ENCODE measurements at regions of chr12 and their contacts with region 1.

Region 1: DNA sequence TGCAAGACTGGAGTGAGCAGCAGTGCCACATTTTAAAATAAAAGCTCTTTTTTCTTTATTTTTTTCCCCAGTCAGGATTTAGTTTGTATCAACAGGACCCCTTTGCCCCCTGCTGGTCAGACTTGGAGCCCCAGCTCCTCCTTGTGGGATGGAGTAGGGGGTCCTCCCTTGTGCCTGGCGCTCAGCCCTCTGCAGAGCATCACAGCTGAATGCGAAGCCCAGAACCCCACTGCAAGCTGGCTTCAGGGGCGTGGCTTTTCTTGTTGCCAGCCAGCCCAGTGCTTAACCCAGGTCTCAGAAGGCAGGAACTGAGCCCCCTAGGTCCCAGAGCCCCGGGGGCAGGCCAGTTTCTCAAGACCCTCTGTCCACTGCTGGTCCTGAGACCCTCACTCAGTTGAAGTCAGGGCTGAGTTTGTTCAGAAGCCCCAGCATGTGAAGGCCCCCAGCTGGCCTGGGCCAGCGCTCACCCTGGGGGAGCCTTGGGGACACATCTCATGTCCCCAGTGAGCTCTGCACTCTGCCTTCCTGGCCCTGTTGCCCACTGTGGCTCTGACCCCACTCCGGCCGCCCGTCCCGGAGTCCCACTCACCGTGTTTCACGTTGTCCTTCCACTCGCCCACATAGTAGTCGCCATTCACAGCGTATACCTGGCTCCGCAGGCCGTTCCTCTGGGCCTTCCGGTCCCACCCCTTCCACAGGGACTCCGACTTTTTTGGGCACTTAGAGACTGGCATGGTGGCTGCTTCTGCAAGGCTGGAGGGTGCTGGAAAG is 519 bp downstream of the MORN3 start:
- DNase-seq: peak; percentile 46 to 85 (median 60)
- ATAC-seq: no peak
- H3K4me3 Mint-ChIP-seq: peak overlapping the region in 7 of 10 donors; percentile 18 to 68 (median 45)
- H3K27ac Mint-ChIP-seq: peak overlapping the region in 9 of 10 donors; percentile 48 to 94 (median 85)
- H3K4me1 Mint-ChIP-seq: peaks cover 24 to 64% (median 62%) of the 10 kb centered on the region in 4 donors
- H3K27me3 Mint-ChIP-seq: no peaks in the 10 kb centered on the region

Region 2: DNA sequence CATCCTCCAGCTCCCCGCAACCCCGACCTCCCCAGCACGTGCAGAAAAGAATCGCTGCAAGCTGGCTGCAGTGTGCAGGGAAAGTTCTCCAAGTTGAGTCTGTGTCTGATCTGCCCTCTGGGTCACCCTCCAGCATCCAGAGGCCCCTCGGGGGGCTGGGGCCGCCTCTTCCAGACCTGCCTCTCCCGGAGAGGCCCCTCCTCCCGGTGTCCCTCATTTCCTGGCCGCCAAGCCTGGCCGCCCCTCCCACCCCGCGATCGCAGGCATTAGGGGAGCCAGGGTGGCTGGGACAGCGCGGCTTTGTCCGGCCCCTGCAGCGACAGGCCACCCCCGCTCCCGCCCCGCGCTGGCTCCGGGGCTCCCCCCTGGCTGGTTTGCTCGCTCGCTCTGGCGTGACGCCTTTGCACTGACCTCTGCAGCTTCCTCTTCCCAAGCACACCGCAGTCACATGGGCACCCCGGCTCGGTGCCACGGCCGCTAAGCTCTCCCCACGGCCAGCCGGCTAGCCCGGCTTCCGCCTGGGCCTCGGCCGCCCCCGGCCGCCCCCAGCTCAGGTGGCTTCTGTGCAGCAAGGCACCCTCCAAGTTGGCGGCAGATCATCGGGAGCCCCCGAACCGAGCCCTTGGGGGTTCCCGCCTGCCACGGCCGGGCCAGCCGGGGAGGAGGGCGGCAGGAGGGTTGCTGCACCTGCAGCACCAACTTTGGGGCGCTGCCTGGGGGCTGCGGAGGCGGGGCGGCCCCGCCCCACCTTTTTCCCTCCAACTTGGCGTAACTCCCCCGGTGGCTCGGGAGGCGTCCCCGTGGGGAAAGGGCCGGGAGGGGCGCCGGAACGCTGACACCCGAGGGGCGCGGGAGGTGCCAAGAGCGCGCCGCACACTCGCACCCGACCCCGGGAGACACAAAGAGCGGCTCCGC is 131.8 kb before region 1 on chr12:
- POLR2A ChIA-PET with region 1: interaction called, 11 read pairs
- DNase-seq: peak; percentile 31 to 74 (median 51)
- ATAC-seq: peak in 1 of 2 donors; percentile 5
- H3K4me3 Mint-ChIP-seq: peak overlapping the region; percentile 72 to 92 (median 78)
- H3K27ac Mint-ChIP-seq: peak overlapping the region; percentile 85 to 99 (median 95)
- H3K4me1 Mint-ChIP-seq: peaks cover 19 to 66% (median 51%) of the 10 kb centered on the region in 4 donors
- H3K27me3 Mint-ChIP-seq: no peaks in the 10 kb centered on the region

Region 3: GRCh38 chr12:121579981-121580868 is 88.7 kb before region 1 on chr12:
- POLR2A ChIA-PET with region 1: interaction called, 32 read pairs
- DNase-seq: peak; percentile 59 to 88 (median 70)
- ATAC-seq: peak; percentile 65 to 66
- H3K4me3 Mint-ChIP-seq: peak overlapping the region; percentile 95 to 99 (median 97)
- H3K27ac Mint-ChIP-seq: peak overlapping the region; percentile 91 to 100 (median 99)
- H3K4me1 Mint-ChIP-seq: peaks cover 20 to 45% (median 36%) of the 10 kb centered on the region in 4 donors
- H3K27me3 Mint-ChIP-seq: no peaks in the 10 kb centered on the region

Region 4: DNA sequence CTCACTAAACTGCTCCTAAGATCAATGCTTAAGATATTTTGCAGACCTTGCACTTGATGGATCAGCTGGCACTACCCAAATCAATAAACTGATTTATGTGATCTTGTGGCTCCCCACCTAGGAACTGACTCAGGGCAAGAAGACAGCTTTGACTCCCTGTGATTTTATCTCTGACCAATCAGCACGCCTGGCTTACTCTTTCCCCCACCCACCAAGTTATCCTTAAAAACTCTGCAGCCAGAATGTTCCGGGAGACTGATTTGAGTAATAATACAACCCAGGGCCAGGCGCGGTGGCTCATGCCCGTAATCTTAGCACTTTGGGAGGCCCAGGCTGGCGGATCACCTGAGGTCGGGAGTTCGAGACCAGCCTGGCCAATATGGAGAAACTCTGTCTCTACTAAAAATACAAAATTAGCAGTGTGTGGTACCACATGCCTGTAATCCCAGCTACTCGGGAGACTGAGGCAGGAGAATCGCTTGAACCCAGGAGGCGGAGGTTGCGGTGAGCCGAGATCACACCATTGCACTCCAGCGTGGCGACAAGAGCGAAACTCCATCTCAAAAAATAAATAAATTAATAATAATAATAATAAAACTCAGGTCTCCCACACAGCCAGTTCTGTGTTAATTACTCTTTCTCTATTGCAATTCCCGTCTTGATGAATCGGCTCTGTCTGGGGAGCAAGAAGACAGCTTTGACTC is 11.5 kb before region 1 on chr12:
- POLR2A ChIA-PET with region 1: interaction called, 52 read pairs
- DNase-seq: no peak
- ATAC-seq: no peak
- H3K4me3 Mint-ChIP-seq: peak overlapping the region in 8 of 10 donors; percentile 27 to 94 (median 60)
- H3K27ac Mint-ChIP-seq: peak overlapping the region; percentile 5 to 100 (median 98)
- H3K4me1 Mint-ChIP-seq: peaks cover 26 to 71% (median 59%) of the 10 kb centered on the region in 4 donors
- H3K27me3 Mint-ChIP-seq: no peaks in the 10 kb centered on the region

Region 5: GRCh38 chr12:121724930-121725329 is 56.0 kb after region 1 on chr12:
- POLR2A ChIA-PET with region 1: no interaction called
- DNase-seq: no peak
- ATAC-seq: no peak
- H3K4me3 Mint-ChIP-seq: no peak overlapping the region
- H3K27ac Mint-ChIP-seq: no peak overlapping the region
- H3K4me1 Mint-ChIP-seq: peaks cover 0 to 3% (median 0%) of the 10 kb centered on the region in 4 donors
- H3K27me3 Mint-ChIP-seq: no peaks in the 10 kb centered on the region

Region 6: DNA sequence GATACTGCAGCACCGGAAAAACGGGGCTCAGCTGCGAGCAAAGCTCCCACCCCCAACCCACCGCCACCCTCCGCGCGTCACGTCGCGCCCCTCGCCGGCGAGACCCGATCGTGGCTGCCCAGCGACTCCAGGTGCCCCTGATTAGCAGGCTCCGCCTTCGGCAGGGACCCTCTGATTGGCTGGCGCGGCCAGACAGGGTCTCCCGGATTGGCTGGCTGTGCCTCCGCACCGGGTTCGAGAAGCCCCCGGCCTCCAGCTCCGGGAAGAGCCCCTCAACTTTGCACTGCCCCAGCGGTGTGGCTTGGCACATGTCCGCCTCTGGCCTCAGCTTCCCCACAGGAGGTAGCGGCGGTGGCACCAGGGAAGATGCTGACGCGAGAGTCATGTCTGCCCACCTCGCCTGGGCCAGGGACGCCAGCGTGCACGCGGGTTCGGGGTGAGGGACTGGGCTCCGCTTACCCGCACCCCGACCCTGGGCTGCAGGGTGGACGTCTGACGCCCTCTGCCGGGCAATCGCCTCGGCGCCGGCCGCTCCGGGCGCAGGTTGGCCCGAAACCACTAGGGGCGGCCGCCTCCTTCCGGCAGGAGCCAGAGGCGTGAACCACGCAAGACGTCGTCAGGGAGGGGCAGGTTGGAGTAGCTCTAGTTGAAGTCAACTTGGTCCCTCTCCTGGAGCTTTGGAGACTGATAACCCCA is 125.1 kb after region 1 on chr12:
- POLR2A ChIA-PET with region 1: interaction called, 10 read pairs
- DNase-seq: peak; percentile 91 to 98 (median 95)
- ATAC-seq: peak; percentile 49 to 59
- H3K4me3 Mint-ChIP-seq: peak overlapping the region; percentile 75 to 96 (median 86)
- H3K27ac Mint-ChIP-seq: peak overlapping the region; percentile 87 to 99 (median 97)
- H3K4me1 Mint-ChIP-seq: peaks cover 46 to 80% (median 73%) of the 10 kb centered on the region in 4 donors
- H3K27me3 Mint-ChIP-seq: no peaks in the 10 kb centered on the region

Measured in naive thymus-derived CD8-positive, alpha-beta T cell (primary cell).